ENCODE measurements at regions of chr3 and their contacts with region 1.

Region 1: GRCh38 chr3:186493525-186494255 is 50.5 kb downstream of the CRYGS start:
- DNase-seq: no peak
- ATAC-seq: no peak

Region 2: GRCh38 chr3:186268616-186269448 is 224.9 kb before region 1 on chr3:
- intact Hi-C with region 1: loop called in 1 of 2 experiments (anchors 5 kb)
- DNase-seq: no peak
- ATAC-seq: no peak

Measured in left cardiac atrium (tissue), 4 donors.